ENCODE measurements at regions of chr17 and their contacts with region 1.

Region 1: GRCh38 chr17:7572588-7573323 is 6.7 kb upstream of the CD68 start:
- DNase-seq: peak; percentile 100
- ATAC-seq: peak; percentile 83
- H3K4me3 ChIP-seq: peak overlapping the region; percentile 72 to 98 (median 93)
- H3K4me3 Mint-ChIP-seq: peak overlapping the region; percentile 94
- H3K27ac ChIP-seq: peak overlapping the region; percentile 85 to 94
- H3K27ac Mint-ChIP-seq: peak overlapping the region; percentile 99
- H3K4me1 ChIP-seq: peaks cover 22 to 29% of the 10 kb centered on the region in 2 donors
- H3K4me1 Mint-ChIP-seq: peaks cover 52% of the 10 kb centered on the region
- H3K27me3 ChIP-seq: no peaks in the 10 kb centered on the region
- H3K27me3 Mint-ChIP-seq: no peaks in the 10 kb centered on the region
- CTCF ChIP-seq: no peak

Region 2: GRCh38 chr17:7252176-7253043 is 320.3 kb before region 1 on chr17 and contains the start of gene ELP5:
- CTCF ChIA-PET with region 1: no interaction called
- POLR2A ChIA-PET with region 1: no interaction called
- intact Hi-C with region 1: loop called (anchors 1 kb)
- DNase-seq: peak; percentile 100
- ATAC-seq: peak; percentile 64
- H3K4me3 ChIP-seq: peak within 1 kb of the TSS; percentile 69 to 90 (median 78)
- H3K4me3 Mint-ChIP-seq: peak within 1 kb of the TSS; percentile 98
- H3K27ac ChIP-seq: peak within 1 kb of the TSS; percentile 98 to 100
- H3K27ac Mint-ChIP-seq: peak within 1 kb of the TSS; percentile 100
- H3K4me1 ChIP-seq: peaks cover 30 to 33% of the 10 kb centered on the region in 2 donors
- H3K4me1 Mint-ChIP-seq: peaks cover 44% of the 10 kb centered on the region
- H3K27me3 ChIP-seq: no peaks in the 10 kb centered on the region
- H3K27me3 Mint-ChIP-seq: no peaks in the 10 kb centered on the region
- CTCF ChIP-seq: no peak
- total RNA-seq, gene ELP5: 42.2 and 48.0 TPM in 2 replicates

Region 3: GRCh38 chr17:7403977-7404736 is 168.6 kb before region 1 on chr17 and contains the start of gene TMEM256:
- CTCF ChIA-PET with region 1: no interaction called
- POLR2A ChIA-PET with region 1: no interaction called
- intact Hi-C with region 1: loop called (anchors 5 kb)
- DNase-seq: peak; percentile 98
- ATAC-seq: peak; percentile 87
- H3K4me3 ChIP-seq: peak within 1 kb of the TSS; percentile 57 to 95 (median 82)
- H3K4me3 Mint-ChIP-seq: peak within 1 kb of the TSS; percentile 98
- H3K27ac ChIP-seq: peak within 1 kb of the TSS; percentile 45 to 59
- H3K27ac Mint-ChIP-seq: peak within 1 kb of the TSS; percentile 94
- H3K4me1 ChIP-seq: peaks cover 17 to 20% of the 10 kb centered on the region in 2 donors
- H3K4me1 Mint-ChIP-seq: peaks cover 22% of the 10 kb centered on the region
- H3K27me3 ChIP-seq: peaks cover 0 to 27% (median 4%) of the 10 kb centered on the region in 4 experiments
- H3K27me3 Mint-ChIP-seq: peaks cover 17% of the 10 kb centered on the region
- CTCF ChIP-seq: no peak
- total RNA-seq, gene TMEM256: 64.5 and 67.8 TPM in 2 replicates

Region 4: GRCh38 chr17:7548585-7549400 is 24.0 kb before region 1 on chr17 and contains the start of gene TNFSF12:
- CTCF ChIA-PET with region 1: no interaction called
- POLR2A ChIA-PET with region 1: interaction called, 10 read pairs
- intact Hi-C with region 1: no loop called
- DNase-seq: peak; percentile 61
- ATAC-seq: peak; percentile 52
- H3K4me3 ChIP-seq: peak within 1 kb of the TSS; percentile 59 to 73 (median 72)
- H3K4me3 Mint-ChIP-seq: peak within 1 kb of the TSS; percentile 85
- H3K27ac ChIP-seq: peak within 1 kb of the TSS; percentile 54 to 92
- H3K27ac Mint-ChIP-seq: peak within 1 kb of the TSS; percentile 91
- H3K4me1 ChIP-seq: peaks cover 36 to 53% of the 10 kb centered on the region in 2 donors
- H3K4me1 Mint-ChIP-seq: peaks cover 42% of the 10 kb centered on the region
- H3K27me3 ChIP-seq: no peaks in the 10 kb centered on the region
- H3K27me3 Mint-ChIP-seq: no peaks in the 10 kb centered on the region
- CTCF ChIP-seq: no peak
- total RNA-seq, gene TNFSF12: 40.6 and 44.5 TPM in 2 replicates

Region 5: DNA sequence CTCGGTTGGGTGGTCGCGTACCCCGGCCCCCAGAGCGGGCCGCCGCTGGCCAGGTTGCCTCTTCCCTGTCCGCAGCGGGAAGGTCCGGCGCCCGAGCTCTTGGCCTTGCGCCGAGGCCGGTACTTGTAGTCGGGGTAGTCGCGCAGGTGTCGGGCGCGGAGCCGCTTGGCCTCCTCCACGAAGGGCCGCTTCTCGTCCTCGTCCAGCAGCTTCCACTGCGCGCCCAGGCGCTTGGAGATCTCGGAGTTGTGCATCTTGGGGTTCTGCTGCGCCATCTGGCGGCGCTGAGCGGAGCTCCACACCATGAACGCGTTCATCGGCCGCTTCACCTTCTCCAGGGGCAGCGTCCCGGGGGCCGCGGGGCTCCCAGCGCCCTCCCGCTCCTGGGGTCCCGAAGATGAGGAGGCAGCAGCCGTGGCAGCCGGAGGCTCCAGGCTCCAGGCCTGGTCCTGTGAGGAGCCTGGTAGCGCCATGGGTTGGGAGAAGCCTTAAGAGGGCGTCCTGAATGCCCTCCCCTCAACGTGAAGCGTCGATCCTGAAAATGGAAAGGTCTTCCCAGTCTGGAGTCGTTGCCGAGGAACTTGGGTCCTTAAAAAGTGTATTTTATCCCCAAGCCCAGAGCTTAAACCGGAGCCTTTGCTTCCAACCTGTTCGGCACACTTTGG is 16.6 kb after region 1 on chr17:
- CTCF ChIA-PET with region 1: interaction called, 15 read pairs
- POLR2A ChIA-PET with region 1: interaction called, 15 read pairs
- intact Hi-C with region 1: no loop called
- DNase-seq: peak; percentile 84
- ATAC-seq: peak; percentile 86
- H3K4me3 ChIP-seq: no peak overlapping the region
- H3K4me3 Mint-ChIP-seq: no peak overlapping the region
- H3K27ac ChIP-seq: no peak overlapping the region
- H3K27ac Mint-ChIP-seq: no peak overlapping the region
- H3K4me1 ChIP-seq: peaks cover 7 to 21% of the 10 kb centered on the region in 2 donors
- H3K4me1 Mint-ChIP-seq: peaks cover 10% of the 10 kb centered on the region
- H3K27me3 ChIP-seq: no peaks in the 10 kb centered on the region
- H3K27me3 Mint-ChIP-seq: no peaks in the 10 kb centered on the region
- CTCF ChIP-seq: peak; percentile 91

Region 6: GRCh38 chr17:7667656-7668406 is 95.1 kb after region 1 on chr17:
- CTCF ChIA-PET with region 1: no interaction called
- POLR2A ChIA-PET with region 1: no interaction called
- intact Hi-C with region 1: no loop called
- DNase-seq: no peak
- ATAC-seq: no peak
- H3K4me3 ChIP-seq: no peak overlapping the region
- H3K4me3 Mint-ChIP-seq: no peak overlapping the region
- H3K27ac ChIP-seq: no peak overlapping the region
- H3K27ac Mint-ChIP-seq: no peak overlapping the region
- H3K4me1 ChIP-seq: no peaks in the 10 kb centered on the region
- H3K4me1 Mint-ChIP-seq: no peaks in the 10 kb centered on the region
- H3K27me3 ChIP-seq: no peaks in the 10 kb centered on the region
- H3K27me3 Mint-ChIP-seq: no peaks in the 10 kb centered on the region
- CTCF ChIP-seq: no peak

Region 7: GRCh38 chr17:7856883-7857723 is 284.3 kb after region 1 on chr17 and contains the start of gene NAA38:
- CTCF ChIA-PET with region 1: no interaction called
- POLR2A ChIA-PET with region 1: no interaction called
- intact Hi-C with region 1: loop called (anchors 5 kb)
- DNase-seq: peak; percentile 99
- ATAC-seq: peak; percentile 82
- H3K4me3 ChIP-seq: peak within 1 kb of the TSS; percentile 57 to 92 (median 85)
- H3K4me3 Mint-ChIP-seq: no peak within 1 kb of the TSS
- H3K27ac ChIP-seq: peak within 1 kb of the TSS; percentile 85 to 90
- H3K27ac Mint-ChIP-seq: no peak within 1 kb of the TSS
- H3K4me1 ChIP-seq: peaks cover 20 to 32% of the 10 kb centered on the region in 2 donors
- H3K4me1 Mint-ChIP-seq: peaks cover 5% of the 10 kb centered on the region
- H3K27me3 ChIP-seq: no peaks in the 10 kb centered on the region
- H3K27me3 Mint-ChIP-seq: no peaks in the 10 kb centered on the region
- CTCF ChIP-seq: no peak
- total RNA-seq, gene NAA38: 20.0 and 22.0 TPM in 2 replicates